ENCODE measurements at regions of chr11 and their contacts with region 1.

Region 1: GRCh38 chr11:22169833-22170232 is 23.1 kb upstream of the ANO5 start:
- DNase-seq: no peak
- H3K4me3 ChIP-seq: no peak overlapping the region
- H3K27ac ChIP-seq: no peak overlapping the region
- H3K4me1 ChIP-seq: no peaks in the 10 kb centered on the region
- H3K27me3 ChIP-seq: no peaks in the 10 kb centered on the region
- CTCF ChIP-seq: no peak
- POLR2A ChIP-seq: no peak

Region 2: GRCh38 chr11:22304337-22304961 is 134.6 kb after region 1 on chr11:
- intact Hi-C with region 1: loop called (anchors 2 kb)
- DNase-seq: no peak
- H3K4me3 ChIP-seq: no peak overlapping the region
- H3K27ac ChIP-seq: no peak overlapping the region
- H3K4me1 ChIP-seq: no peaks in the 10 kb centered on the region
- H3K27me3 ChIP-seq: no peaks in the 10 kb centered on the region
- CTCF ChIP-seq: peak; percentile 27 to 82 (median 70)
- POLR2A ChIP-seq: no peak

Measured in prostate gland (tissue), 2 donors.